Sigmoid colon (tissue), 7 donors: ENCODE measurements at regions of chr14 and their contacts with region 1.

Region 1: GRCh38 chr14:52552063-52552988 is at the starts of genes GPR137C and TXNDC16:
- DNase-seq: peak; percentile 100
- H3K4me3 ChIP-seq: peak within 1 kb of the TSS; percentile 80 to 90 (median 87)
- H3K27ac ChIP-seq: peak within 1 kb of the TSS; percentile 89 to 95 (median 92)
- H3K4me1 ChIP-seq: peaks cover 0 to 27% (median 24%) of the 10 kb centered on the region in 4 donors
- H3K27me3 ChIP-seq: no peaks in the 10 kb centered on the region
- CTCF ChIP-seq: no peak
- EP300 ChIP-seq: no peak
- POLR2A ChIP-seq: peak; percentile 64 to 88
- total RNA-seq, gene GPR137C: 0.49 to 0.71 (median 0.62) TPM
- total RNA-seq, gene TXNDC16: 10.5 to 14.3 (median 13.2) TPM

Region 2: DNA sequence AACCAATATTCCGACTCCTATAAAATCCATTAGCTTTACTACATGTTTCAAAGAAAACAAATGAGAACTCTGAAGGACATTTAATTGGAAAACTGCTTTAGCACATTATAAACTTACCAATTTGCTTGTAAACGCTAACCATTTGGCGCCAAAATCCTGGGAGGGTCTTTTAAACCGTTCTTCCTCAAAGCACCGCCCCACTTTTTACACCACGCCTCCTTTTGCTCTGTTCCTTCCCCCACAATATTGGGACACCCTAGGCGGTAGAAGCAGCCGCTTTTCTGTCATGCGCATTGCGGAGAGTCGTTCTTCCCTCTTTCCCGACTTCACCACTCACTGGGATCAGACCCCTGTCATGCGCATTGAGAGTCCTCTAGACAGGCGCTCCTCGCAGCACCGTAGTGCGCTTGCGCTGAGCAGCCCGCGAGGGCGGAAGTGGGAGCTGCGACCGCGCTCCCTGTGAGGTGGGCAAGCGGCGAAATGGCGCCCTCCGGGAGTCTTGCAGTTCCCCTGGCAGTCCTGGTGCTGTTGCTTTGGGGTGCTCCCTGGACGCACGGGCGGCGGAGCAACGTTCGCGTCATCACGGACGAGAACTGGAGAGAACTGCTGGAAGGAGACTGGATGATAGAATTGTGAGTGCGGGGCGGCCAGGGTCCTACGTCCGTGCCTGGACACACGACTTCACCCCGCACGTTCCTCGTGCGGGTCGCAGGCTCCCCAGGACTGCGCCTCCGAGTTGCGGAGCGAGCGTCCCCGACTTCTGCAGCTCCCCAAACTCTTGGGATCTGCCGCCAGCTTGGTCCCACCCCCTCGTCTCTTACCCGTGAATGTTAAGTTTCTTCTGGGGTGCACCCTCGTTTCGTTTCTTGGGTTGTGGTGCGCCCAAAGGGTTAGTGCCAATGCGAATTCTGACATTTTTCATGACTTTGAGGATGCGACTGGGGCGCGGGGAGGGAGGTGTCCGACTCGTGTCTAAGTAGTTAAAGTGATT is 1312.2 kb before region 1 on chr14 and contains the start of gene TMX1:
- intact Hi-C with region 1: loop called (anchors 10 kb)
- DNase-seq: peak; percentile 99
- H3K4me3 ChIP-seq: peak within 1 kb of the TSS; percentile 81 to 97 (median 91)
- H3K27ac ChIP-seq: peak within 1 kb of the TSS; percentile 85 to 88 (median 86)
- H3K4me1 ChIP-seq: peaks cover 0 to 25% (median 20%) of the 10 kb centered on the region in 4 donors
- H3K27me3 ChIP-seq: no peaks in the 10 kb centered on the region
- CTCF ChIP-seq: no peak
- EP300 ChIP-seq: peak in 1 of 4 donors; percentile 7
- POLR2A ChIP-seq: peak; percentile 81 to 84
- total RNA-seq, gene TMX1: 21.2 to 38.3 (median 27.7) TPM

Region 3: GRCh38 chr14:52422650-52423356 is 129.5 kb before region 1 on chr14:
- intact Hi-C with region 1: no loop called
- DNase-seq: no peak
- H3K4me3 ChIP-seq: no peak overlapping the region
- H3K27ac ChIP-seq: no peak overlapping the region
- H3K4me1 ChIP-seq: peaks cover 0 to 15% (median 13%) of the 10 kb centered on the region in 4 donors
- H3K27me3 ChIP-seq: no peaks in the 10 kb centered on the region
- CTCF ChIP-seq: no peak
- EP300 ChIP-seq: no peak
- POLR2A ChIP-seq: no peak

Region 4: DNA sequence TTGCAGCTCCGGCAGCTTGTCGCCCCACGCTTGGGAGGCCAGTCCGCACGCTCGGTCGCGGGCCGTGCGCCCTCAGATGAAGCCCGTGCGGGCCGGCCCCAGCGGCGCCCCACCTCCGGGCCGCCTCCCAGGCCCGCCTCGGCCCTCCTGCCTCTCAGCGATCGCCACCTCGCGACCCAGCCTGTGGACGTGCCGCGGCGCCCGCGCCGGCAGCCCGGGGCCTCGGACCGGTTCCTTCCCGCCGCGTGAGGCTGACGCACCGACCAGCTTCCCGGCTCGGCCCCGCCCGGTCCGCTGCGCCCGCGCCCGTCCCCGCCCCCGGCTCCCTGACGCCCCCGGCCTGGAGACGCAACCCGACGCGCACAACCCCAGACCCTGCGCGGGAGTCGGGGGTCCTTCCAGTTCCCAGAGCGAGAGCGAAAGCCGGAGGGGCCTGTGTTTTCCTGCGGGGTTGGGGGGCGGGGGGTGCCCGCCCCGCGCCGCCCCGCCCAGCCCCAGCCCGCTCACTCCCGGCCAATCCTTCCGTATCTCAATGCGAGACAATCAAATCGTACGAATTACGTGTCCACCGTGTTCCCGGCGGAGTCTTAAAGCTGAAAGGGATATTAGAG is 143.3 kb after region 1 on chr14 and contains the start of gene ERO1A:
- intact Hi-C with region 1: loop called (anchors 5 kb)
- DNase-seq: peak; percentile 91
- H3K4me3 ChIP-seq: peak within 1 kb of the TSS; percentile 57 to 86 (median 72)
- H3K27ac ChIP-seq: peak within 1 kb of the TSS; percentile 91 to 98 (median 95)
- H3K4me1 ChIP-seq: peaks cover 0 to 26% (median 8%) of the 10 kb centered on the region in 4 donors
- H3K27me3 ChIP-seq: no peaks in the 10 kb centered on the region
- CTCF ChIP-seq: no peak
- EP300 ChIP-seq: no peak
- POLR2A ChIP-seq: no peak
- total RNA-seq, gene ERO1A: 24.3 to 27.4 (median 27.2) TPM